ENCODE measurements at regions of chr9 and their contacts with region 1.

Region 1: GRCh38 chr9:123225374-123225813 is 43.0 kb downstream of the STRBP start:
- DNase-seq: peak; percentile 78
- H3K4me3 Mint-ChIP-seq: no peak overlapping the region
- H3K27ac Mint-ChIP-seq: peak overlapping the region; percentile 80
- H3K4me1 Mint-ChIP-seq: peaks cover 28% of the 10 kb centered on the region
- H3K27me3 Mint-ChIP-seq: no peaks in the 10 kb centered on the region

Region 2: GRCh38 chr9:122464633-122465567 is 760.5 kb before region 1 on chr9:
- CTCF ChIA-PET with region 1: no interaction called
- POLR2A ChIA-PET with region 1: no interaction called
- intact Hi-C with region 1: loop called (anchors 2 kb)
- DNase-seq: peak; percentile 75
- H3K4me3 Mint-ChIP-seq: peak overlapping the region; percentile 73
- H3K27ac Mint-ChIP-seq: peak overlapping the region; percentile 39
- H3K4me1 Mint-ChIP-seq: peaks cover 10% of the 10 kb centered on the region
- H3K27me3 Mint-ChIP-seq: peaks cover 25% of the 10 kb centered on the region

Region 3: DNA sequence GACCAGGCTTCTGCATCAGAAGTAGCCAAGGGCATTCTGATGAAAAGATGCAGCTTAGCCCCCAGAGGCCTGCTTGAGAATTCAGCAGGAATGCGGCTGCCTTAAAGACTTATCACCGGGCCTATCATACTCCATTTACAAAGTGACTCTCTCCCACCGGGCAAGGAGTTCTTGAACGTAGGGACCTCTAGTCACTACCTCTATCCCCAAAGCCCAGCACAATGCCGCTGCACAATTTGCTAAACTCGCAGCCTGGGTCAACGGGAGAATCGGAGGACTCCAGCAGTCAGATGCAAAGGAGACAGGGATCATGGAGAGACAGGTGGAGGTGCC is 397.7 kb before region 1 on chr9:
- CTCF ChIA-PET with region 1: interaction called, 3 read pairs
- POLR2A ChIA-PET with region 1: no interaction called
- intact Hi-C with region 1: loop called (anchors 1 kb)
- DNase-seq: no peak
- H3K4me3 Mint-ChIP-seq: peak overlapping the region; percentile 97
- H3K27ac Mint-ChIP-seq: peak overlapping the region; percentile 81
- H3K4me1 Mint-ChIP-seq: peaks cover 34% of the 10 kb centered on the region
- H3K27me3 Mint-ChIP-seq: no peaks in the 10 kb centered on the region

Region 4: DNA sequence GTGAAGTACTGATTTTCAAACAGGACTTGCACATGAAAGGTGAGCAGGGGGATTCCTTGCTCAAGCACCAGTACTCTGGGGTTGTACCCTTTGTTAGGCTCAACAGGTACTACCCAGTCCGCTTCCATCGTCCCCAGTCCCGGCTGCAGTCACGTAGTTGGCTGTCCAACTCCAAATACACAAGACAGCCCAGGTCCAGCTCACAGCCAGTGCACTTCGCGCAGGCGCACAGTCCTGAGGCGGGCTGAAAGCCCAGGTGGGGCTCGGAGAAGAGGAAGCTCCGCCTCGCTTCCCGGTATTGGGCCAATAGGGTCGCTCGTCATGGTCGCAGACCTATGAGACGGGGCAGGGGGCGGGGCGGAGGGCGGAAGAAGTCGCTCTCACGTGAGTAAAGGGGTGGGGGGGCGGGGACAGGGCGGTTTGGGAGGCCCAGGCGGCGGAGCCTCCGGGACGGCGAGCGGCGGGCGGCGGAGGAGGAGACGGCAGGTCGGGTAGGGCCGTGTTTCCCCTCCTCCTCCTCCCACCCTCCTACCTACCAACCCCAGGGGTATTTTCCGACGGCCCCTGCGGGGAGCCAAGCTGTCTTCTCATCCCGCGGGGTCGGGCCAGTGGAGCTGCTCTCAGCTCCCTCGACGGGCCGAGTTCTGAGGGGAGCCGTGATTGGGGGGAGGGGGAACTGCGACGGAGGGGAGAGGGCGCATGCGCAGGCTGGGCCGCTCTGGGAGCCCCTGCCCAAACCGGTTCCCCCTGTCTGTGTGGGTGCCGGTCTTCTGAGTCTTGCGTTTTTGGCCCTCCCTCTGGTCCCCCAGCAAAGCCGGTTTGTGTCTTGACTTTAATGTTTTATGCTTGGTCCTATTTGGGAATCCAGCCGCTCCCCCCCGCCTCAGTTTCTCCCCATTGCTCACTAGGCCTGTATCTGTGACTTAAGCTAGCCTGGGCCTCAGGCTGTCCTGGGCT is 284.5 kb before region 1 on chr9 and contains the start of gene RABGAP1:
- CTCF ChIA-PET with region 1: interaction called, 4 read pairs
- POLR2A ChIA-PET with region 1: no interaction called
- intact Hi-C with region 1: loop called (anchors 10 kb)
- DNase-seq: peak; percentile 99
- H3K4me3 Mint-ChIP-seq: peak within 1 kb of the TSS; percentile 94
- H3K27ac Mint-ChIP-seq: peak within 1 kb of the TSS; percentile 84
- H3K4me1 Mint-ChIP-seq: peaks cover 35% of the 10 kb centered on the region
- H3K27me3 Mint-ChIP-seq: no peaks in the 10 kb centered on the region
- total RNA-seq, gene RABGAP1: 27.1 to 28.8 TPM

Region 5: DNA sequence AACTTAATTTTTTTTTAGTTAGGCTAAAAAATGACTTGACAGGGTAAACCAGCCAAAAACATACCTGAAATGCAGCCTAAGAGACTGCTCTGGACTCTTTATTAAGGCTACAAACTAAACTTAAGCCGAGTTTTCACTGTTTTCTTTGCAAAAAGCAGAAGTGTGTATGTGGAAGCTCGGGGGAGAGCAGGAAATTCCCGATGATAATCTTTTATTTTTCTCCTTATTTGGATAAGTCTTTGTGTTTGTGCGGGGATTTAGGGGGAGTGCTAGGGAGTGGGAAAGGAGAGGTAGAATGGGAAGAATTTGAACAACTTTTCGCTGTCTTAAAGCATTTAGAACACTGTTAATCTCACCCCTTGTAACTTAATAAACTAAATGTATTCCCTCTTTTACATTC is 222.6 kb before region 1 on chr9:
- CTCF ChIA-PET with region 1: no interaction called
- POLR2A ChIA-PET with region 1: no interaction called
- intact Hi-C with region 1: no loop called
- DNase-seq: no peak
- H3K4me3 Mint-ChIP-seq: no peak overlapping the region
- H3K27ac Mint-ChIP-seq: no peak overlapping the region
- H3K4me1 Mint-ChIP-seq: peaks cover 3% of the 10 kb centered on the region
- H3K27me3 Mint-ChIP-seq: no peaks in the 10 kb centered on the region

Region 6: GRCh38 chr9:123081824-123082223 is 143.6 kb before region 1 on chr9:
- CTCF ChIA-PET with region 1: interaction called, 13 read pairs
- POLR2A ChIA-PET with region 1: no interaction called
- intact Hi-C with region 1: loop called (anchors 5 kb)
- DNase-seq: no peak
- H3K4me3 Mint-ChIP-seq: no peak overlapping the region
- H3K27ac Mint-ChIP-seq: no peak overlapping the region
- H3K4me1 Mint-ChIP-seq: no peaks in the 10 kb centered on the region
- H3K27me3 Mint-ChIP-seq: no peaks in the 10 kb centered on the region

Region 7: GRCh38 chr9:123268240-123268949 is 43.0 kb after region 1 on chr9 and contains the start of gene STRBP:
- CTCF ChIA-PET with region 1: interaction called, 4 read pairs
- POLR2A ChIA-PET with region 1: no interaction called
- intact Hi-C with region 1: loop called (anchors 1 kb)
- DNase-seq: peak; percentile 93
- H3K4me3 Mint-ChIP-seq: peak within 1 kb of the TSS; percentile 69
- H3K27ac Mint-ChIP-seq: no peak within 1 kb of the TSS
- H3K4me1 Mint-ChIP-seq: peaks cover 18% of the 10 kb centered on the region
- H3K27me3 Mint-ChIP-seq: no peaks in the 10 kb centered on the region
- total RNA-seq, gene STRBP: 27.5 to 29.1 TPM

Region 8: GRCh38 chr9:123291736-123292135 is 66.3 kb after region 1 on chr9:
- CTCF ChIA-PET with region 1: no interaction called
- POLR2A ChIA-PET with region 1: no interaction called
- intact Hi-C with region 1: no loop called
- DNase-seq: no peak
- H3K4me3 Mint-ChIP-seq: no peak overlapping the region
- H3K27ac Mint-ChIP-seq: no peak overlapping the region
- H3K4me1 Mint-ChIP-seq: no peaks in the 10 kb centered on the region
- H3K27me3 Mint-ChIP-seq: peaks cover 4% of the 10 kb centered on the region

Region 9: DNA sequence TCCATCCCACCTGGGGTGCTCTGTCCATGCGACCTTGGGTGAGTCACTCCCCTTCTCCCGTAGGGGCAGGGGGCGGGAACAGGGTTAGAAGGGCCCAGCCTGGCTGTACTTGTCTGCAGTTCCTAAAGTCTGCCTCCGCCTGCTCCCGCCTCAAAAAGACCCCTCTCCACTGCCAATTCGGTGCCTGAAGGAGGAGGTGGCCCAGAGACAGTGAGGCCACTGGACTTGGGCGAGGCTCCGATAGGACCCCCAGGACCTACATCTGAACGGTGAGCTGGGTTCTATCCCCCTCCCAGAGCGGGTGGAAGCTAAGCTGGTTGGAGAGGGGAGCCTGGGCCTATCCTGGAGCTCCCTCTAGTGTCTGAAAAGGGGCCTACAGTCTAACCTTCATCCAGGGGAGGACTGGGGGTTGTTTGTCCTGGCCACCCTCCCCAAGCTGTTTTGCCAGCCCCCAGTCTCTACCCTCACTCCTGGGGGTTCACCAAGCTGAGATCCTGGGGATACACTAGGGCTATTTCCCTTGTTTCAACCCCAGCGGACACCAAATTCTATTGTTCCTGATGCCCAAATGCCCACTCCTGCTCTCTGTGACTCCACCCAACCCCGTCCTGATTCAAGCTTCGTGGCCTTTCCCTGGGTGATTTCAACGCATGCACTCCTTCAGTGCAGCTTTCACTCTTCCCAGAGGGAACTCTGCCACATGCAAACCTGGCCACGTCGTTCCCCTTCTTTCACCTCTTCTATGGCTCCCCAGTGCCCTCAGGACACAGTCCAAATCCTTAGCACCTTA is 124.5 kb after region 1 on chr9:
- CTCF ChIA-PET with region 1: interaction called, 17 read pairs
- POLR2A ChIA-PET with region 1: no interaction called
- intact Hi-C with region 1: no loop called
- DNase-seq: peak; percentile 72
- H3K4me3 Mint-ChIP-seq: no peak overlapping the region
- H3K27ac Mint-ChIP-seq: no peak overlapping the region
- H3K4me1 Mint-ChIP-seq: no peaks in the 10 kb centered on the region
- H3K27me3 Mint-ChIP-seq: peaks cover 16% of the 10 kb centered on the region